Activated CD8-positive, alpha-beta T cell treated with anti-CD3 and anti-CD28 coated beads for 36 hours (primary cell): ENCODE measurements at regions of chr11 and their contacts with region 1.

Region 1: GRCh38 chr11:46489661-46490560 is 98.3 kb upstream of the CHRM4 start:
- DNase-seq: peak; percentile 54
- ATAC-seq: peak; percentile 76
- H3K4me3 Mint-ChIP-seq: no peak overlapping the region
- H3K27ac Mint-ChIP-seq: no peak overlapping the region
- H3K4me1 Mint-ChIP-seq: peaks cover 3% of the 10 kb centered on the region
- H3K27me3 Mint-ChIP-seq: no peaks in the 10 kb centered on the region
- CTCF ChIP-seq: peak; percentile 71

Region 2: DNA sequence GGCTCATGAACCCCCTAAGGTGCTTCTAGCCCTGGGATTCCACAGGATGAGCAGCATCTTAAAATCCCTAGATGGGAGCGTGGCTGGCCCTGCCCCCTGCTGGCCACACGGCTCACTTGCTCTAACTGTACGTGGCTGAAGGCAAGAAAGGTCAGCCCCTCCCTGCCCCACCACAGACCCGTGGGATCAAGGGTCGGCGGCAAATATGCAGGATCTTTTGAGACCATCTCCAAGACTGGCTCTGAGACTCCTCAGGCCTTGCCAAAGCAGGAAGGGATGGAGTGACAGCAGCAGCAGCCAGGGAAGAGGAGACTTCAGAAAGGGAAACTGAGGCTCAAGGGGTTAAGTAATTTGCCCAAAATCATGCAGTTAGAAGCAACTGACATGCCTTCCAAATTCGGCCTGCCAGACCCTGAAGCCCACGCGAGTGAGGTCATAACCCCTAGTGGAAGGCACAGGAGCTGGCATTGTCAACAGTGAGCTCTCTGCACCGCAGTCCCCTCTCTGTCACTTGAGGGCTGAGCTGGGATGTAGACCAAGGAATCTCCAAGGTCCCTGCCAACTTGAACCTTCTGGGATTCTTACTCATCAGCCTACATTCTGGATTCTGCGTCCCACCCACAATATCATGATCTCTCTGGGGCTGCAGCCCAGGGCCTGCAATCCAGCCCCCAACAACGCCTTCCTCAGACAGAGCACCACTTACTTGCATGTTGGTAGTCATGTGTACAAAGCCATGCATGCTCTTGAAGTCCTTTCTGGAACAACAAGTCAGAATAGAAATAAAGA is 181.1 kb before region 1 on chr11:
- CTCF ChIA-PET with region 1: no interaction called
- POLR2A ChIA-PET with region 1: no interaction called
- intact Hi-C with region 1: no loop called
- DNase-seq: peak; percentile 88
- ATAC-seq: peak; percentile 88
- H3K4me3 Mint-ChIP-seq: no peak overlapping the region
- H3K27ac Mint-ChIP-seq: no peak overlapping the region
- H3K4me1 Mint-ChIP-seq: peaks cover 5% of the 10 kb centered on the region
- H3K27me3 Mint-ChIP-seq: no peaks in the 10 kb centered on the region
- CTCF ChIP-seq: peak; percentile 92

Region 3: GRCh38 chr11:46505741-46506482 is 16.0 kb after region 1 on chr11:
- CTCF ChIA-PET with region 1: interaction called, 40 read pairs
- POLR2A ChIA-PET with region 1: no interaction called
- intact Hi-C with region 1: no loop called
- DNase-seq: no peak
- ATAC-seq: no peak
- H3K4me3 Mint-ChIP-seq: no peak overlapping the region
- H3K27ac Mint-ChIP-seq: peak overlapping the region; percentile 17
- H3K4me1 Mint-ChIP-seq: peaks cover 16% of the 10 kb centered on the region
- H3K27me3 Mint-ChIP-seq: no peaks in the 10 kb centered on the region
- CTCF ChIP-seq: no peak

Region 4: DNA sequence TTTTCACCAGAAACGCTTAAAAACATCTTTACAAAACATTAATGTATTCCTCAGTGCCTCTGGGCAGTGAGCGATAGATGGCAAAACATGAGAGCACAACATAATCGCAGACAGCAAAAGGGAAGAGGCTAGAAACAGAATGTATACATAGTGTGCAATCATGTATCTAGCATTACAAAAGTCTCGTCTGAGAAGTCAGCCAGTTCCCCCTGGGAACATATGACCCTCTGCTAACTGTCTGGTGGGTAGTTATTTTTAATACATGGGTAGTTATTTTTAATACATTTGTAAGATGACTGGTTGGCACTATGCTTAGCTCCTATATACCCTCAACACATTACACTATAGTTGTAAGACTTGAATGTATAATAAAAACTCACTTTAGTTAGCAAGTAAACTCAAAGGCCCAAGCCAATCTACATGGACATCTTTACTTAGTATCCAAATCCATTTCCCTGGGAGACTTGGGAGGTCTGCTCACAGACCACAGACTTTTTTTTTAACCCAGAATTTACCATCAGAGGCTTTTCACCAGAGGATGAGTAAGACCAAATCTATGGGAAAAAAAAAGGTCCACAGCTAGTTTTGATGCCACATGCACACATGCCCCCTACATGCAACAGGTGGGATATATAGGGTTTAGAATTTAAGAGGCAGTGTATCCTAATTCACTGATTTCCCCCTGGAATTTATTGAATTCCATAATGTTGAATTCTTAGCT is 32.2 kb after region 1 on chr11:
- CTCF ChIA-PET with region 1: interaction called, 12 read pairs
- POLR2A ChIA-PET with region 1: no interaction called
- intact Hi-C with region 1: loop called (anchors 5 kb)
- DNase-seq: no peak
- ATAC-seq: no peak
- H3K4me3 Mint-ChIP-seq: no peak overlapping the region
- H3K27ac Mint-ChIP-seq: no peak overlapping the region
- H3K4me1 Mint-ChIP-seq: peaks cover 9% of the 10 kb centered on the region
- H3K27me3 Mint-ChIP-seq: no peaks in the 10 kb centered on the region
- CTCF ChIP-seq: peak; percentile 33

Region 5: GRCh38 chr11:46537537-46538295 is 47.8 kb after region 1 on chr11:
- CTCF ChIA-PET with region 1: interaction called, 51 read pairs
- POLR2A ChIA-PET with region 1: interaction called, 3 read pairs
- intact Hi-C with region 1: no loop called
- DNase-seq: peak; percentile 70
- ATAC-seq: peak; percentile 95
- H3K4me3 Mint-ChIP-seq: no peak overlapping the region
- H3K27ac Mint-ChIP-seq: peak overlapping the region; percentile 8
- H3K4me1 Mint-ChIP-seq: peaks cover 14% of the 10 kb centered on the region
- H3K27me3 Mint-ChIP-seq: no peaks in the 10 kb centered on the region
- CTCF ChIP-seq: peak; percentile 87